Mucosa of descending colon (tissue), 3 donors: ENCODE measurements at regions of chr1 and their contacts with region 1.

Region 1: GRCh38 chr1:211514030-211514754 is 22.2 kb upstream of the RD3 start:
- DNase-seq: peak; percentile 85 to 88 (median 87)
- ATAC-seq: peak; percentile 62
- H3K4me3 ChIP-seq: no peak overlapping the region
- H3K4me1 ChIP-seq: peaks cover 24% of the 10 kb centered on the region
- CTCF ChIP-seq: peak; percentile 58

Region 2: GRCh38 chr1:211323156-211324063 is 190.8 kb before region 1 on chr1:
- intact Hi-C with region 1: loop called in 1 of 2 experiments (anchors 10 kb)
- DNase-seq: peak in 1 of 3 donors; percentile 89
- ATAC-seq: peak; percentile 65
- H3K4me3 ChIP-seq: no peak overlapping the region
- H3K4me1 ChIP-seq: peaks cover 12% of the 10 kb centered on the region
- CTCF ChIP-seq: peak; percentile 65

Region 3: GRCh38 chr1:212727386-212728181 is 1213.4 kb after region 1 on chr1:
- intact Hi-C with region 1: no loop called
- DNase-seq: no peak
- ATAC-seq: peak; percentile 23
- H3K4me3 ChIP-seq: no peak overlapping the region
- H3K4me1 ChIP-seq: no peaks in the 10 kb centered on the region
- CTCF ChIP-seq: no peak